ENCODE measurements at regions of chr7 and their contacts with region 1.

Region 1: GRCh38 chr7:33471636-33472242 is 342.4 kb downstream of the BBS9 start:
- DNase-seq: no peak
- ATAC-seq: peak in 1 of 4 donors; percentile 31
- H3K4me3 ChIP-seq: no peak overlapping the region
- H3K27ac ChIP-seq: no peak overlapping the region
- H3K4me1 ChIP-seq: no peaks in the 10 kb centered on the region
- H3K27me3 ChIP-seq: no peaks in the 10 kb centered on the region
- CTCF ChIP-seq: no peak
- POLR2A ChIP-seq: no peak

Region 2: GRCh38 chr7:33459340-33459751 is 12.4 kb before region 1 on chr7:
- intact Hi-C with region 1: loop called in 1 of 10 experiments (anchors 2 kb)
- DNase-seq: peak in 1 of 5 donors; percentile 22
- ATAC-seq: peak; percentile 58 to 86 (median 74)
- H3K4me3 ChIP-seq: peak overlapping the region in 1 of 12 donors; percentile 16
- H3K27ac ChIP-seq: no peak overlapping the region
- H3K4me1 ChIP-seq: no peaks in the 10 kb centered on the region
- H3K27me3 ChIP-seq: no peaks in the 10 kb centered on the region
- CTCF ChIP-seq: peak; percentile 23 to 55 (median 44)
- POLR2A ChIP-seq: no peak

Region 3: GRCh38 chr7:33685981-33686683 is 214.4 kb after region 1 on chr7:
- intact Hi-C with region 1: loop called in 1 of 10 experiments (anchors 10 kb)
- DNase-seq: no peak
- ATAC-seq: no peak
- H3K4me3 ChIP-seq: no peak overlapping the region
- H3K27ac ChIP-seq: no peak overlapping the region
- H3K4me1 ChIP-seq: no peaks in the 10 kb centered on the region
- H3K27me3 ChIP-seq: no peaks in the 10 kb centered on the region
- CTCF ChIP-seq: no peak
- POLR2A ChIP-seq: no peak

Measured in heart left ventricle (tissue), 16 donors.